ENCODE measurements at regions of chr4 and their contacts with region 1.

Region 1: GRCh38 chr4:87270144-87270543 is 49.7 kb upstream of the KLHL8 start:
- DNase-seq: peak in 2 of 10 donors; percentile 36 to 44
- H3K4me3 ChIP-seq: peak overlapping the region in 3 of 59 donors; percentile 10 to 17 (median 15)
- H3K27ac ChIP-seq: no peak overlapping the region
- H3K27me3 ChIP-seq: no peaks in the 10 kb centered on the region
- CTCF ChIP-seq: peak; percentile 11 to 88 (median 65)

Region 2: GRCh38 chr4:87375719-87376291 is 105.7 kb after region 1 on chr4:
- intact Hi-C with region 1: loop called in 1 of 2 experiments (anchors 10 kb)
- DNase-seq: no peak
- H3K4me3 ChIP-seq: no peak overlapping the region
- H3K27ac ChIP-seq: peak overlapping the region in 4 of 59 donors; percentile 10 to 36 (median 12)
- H3K27me3 ChIP-seq: no peaks in the 10 kb centered on the region
- CTCF ChIP-seq: peak; percentile 45 to 85 (median 69)

Region 3: GRCh38 chr4:87589522-87589921 is 319.4 kb after region 1 on chr4:
- intact Hi-C with region 1: no loop called
- DNase-seq: no peak
- H3K4me3 ChIP-seq: no peak overlapping the region
- H3K27ac ChIP-seq: peak overlapping the region in 3 of 59 donors; percentile 14 to 17 (median 14)
- H3K27me3 ChIP-seq: no peaks in the 10 kb centered on the region
- CTCF ChIP-seq: no peak